ENCODE measurements at regions of chr14 and their contacts with region 1.

Region 1: DNA sequence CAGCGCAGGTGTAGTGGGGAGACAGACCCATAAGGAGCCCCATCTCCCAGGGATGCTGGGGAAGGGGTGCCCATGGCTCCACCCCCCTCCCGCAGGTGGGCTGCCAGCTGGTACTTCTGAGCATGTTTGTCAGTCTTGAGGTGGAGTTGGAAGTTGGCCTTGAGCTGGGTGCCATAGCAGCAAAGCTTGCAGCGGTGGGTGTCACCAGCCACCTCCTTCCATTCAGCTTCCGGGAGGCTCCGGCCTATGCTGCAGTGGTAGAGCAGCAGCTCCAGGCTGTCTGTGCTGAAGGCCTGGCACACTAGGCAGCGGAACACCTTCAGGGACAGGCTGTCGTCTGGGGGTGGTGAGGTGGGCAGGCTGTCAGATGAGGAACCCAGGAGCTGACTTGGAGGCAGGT is 18.9 kb downstream of the ZFHX2 start:
- DNase-seq: no peak
- H3K4me3 Mint-ChIP-seq: no peak overlapping the region
- H3K27ac Mint-ChIP-seq: no peak overlapping the region
- H3K4me1 Mint-ChIP-seq: no peaks in the 10 kb centered on the region
- H3K27me3 Mint-ChIP-seq: peaks cover 4% of the 10 kb centered on the region
- CTCF ChIP-seq: no peak

Region 2: DNA sequence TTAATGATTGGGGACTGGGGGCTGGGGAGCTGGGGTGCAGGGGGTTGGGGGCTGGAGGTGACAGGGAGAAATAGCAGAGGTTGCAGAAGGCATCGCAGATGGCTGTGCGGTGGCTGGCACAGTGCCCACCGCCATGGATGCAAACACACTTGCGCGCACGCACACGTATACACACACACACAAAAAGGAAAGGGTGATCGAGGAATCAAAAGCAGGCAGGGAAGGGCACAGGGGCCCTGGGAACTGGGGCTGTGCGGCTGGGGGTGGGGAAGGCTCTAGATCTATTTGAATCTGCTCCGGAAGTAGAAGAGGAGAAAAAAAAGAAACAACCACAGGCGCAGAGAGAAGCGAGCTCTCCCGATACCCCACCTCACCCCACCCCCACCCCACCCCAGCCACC is 20.5 kb before region 1 on chr14:
- CTCF ChIA-PET with region 1: interaction called, 14 read pairs
- intact Hi-C with region 1: no loop called
- DNase-seq: no peak
- H3K4me3 Mint-ChIP-seq: no peak overlapping the region
- H3K27ac Mint-ChIP-seq: no peak overlapping the region
- H3K4me1 Mint-ChIP-seq: no peaks in the 10 kb centered on the region
- H3K27me3 Mint-ChIP-seq: peaks cover 45% of the 10 kb centered on the region
- CTCF ChIP-seq: no peak